SK-N-SH (cell line): ENCODE measurements at regions of chr10 and their contacts with region 1.

Region 1: DNA sequence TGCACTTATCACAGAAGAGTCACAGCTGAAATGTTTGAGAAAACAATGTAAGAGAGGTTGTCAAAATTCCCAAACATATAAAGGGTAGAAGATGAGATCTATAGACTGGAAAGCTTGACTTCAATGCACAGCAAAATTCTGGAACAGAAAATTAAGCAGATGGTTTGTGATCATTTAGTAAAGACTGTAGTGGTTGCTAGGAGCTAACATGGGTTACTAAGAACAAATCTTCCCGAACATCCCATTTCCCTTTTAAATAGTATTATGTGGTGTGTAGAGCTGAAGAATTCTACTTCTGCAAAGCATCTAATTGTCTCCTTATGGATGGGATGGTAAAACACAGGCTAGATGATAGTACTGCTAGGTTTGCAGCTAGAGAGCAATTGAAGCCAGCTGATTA is 312.3 kb downstream of the CAMK1D start:
- DNase-seq: no peak
- H3K4me3 ChIP-seq: no peak overlapping the region
- H3K27ac ChIP-seq: no peak overlapping the region
- H3K4me1 ChIP-seq: peaks cover 0 to 4% of the 10 kb centered on the region in 2 experiments; a peak in 2 of 4 replicates
- H3K27me3 ChIP-seq: no peaks in the 10 kb centered on the region
- CTCF ChIP-seq: no peak
- EP300 ChIP-seq: no peak
- RAD21 ChIP-seq: no peak

Region 2: GRCh38 chr10:12264204-12264940 is 397.3 kb before region 1 on chr10:
- CTCF ChIA-PET with region 1: interaction called, 68 read pairs
- POLR2A ChIA-PET with region 1: no interaction called
- DNase-seq: peak; percentile 88
- H3K4me3 ChIP-seq: peak overlapping the region; percentile 45 to 60
- H3K27ac ChIP-seq: peak overlapping the region in 1 of 2 experiments; percentile 45; a peak in 1 of 4 replicates
- H3K4me1 ChIP-seq: no peaks in the 10 kb centered on the region; a peak in 1 of 4 replicates
- H3K27me3 ChIP-seq: no peaks in the 10 kb centered on the region
- CTCF ChIP-seq: peak; percentile 90
- EP300 ChIP-seq: no peak; a peak in 1 of 4 replicates
- RAD21 ChIP-seq: peak; percentile 94